ENCODE measurements at regions of chr4 and their contacts with region 1.

Region 1: DNA sequence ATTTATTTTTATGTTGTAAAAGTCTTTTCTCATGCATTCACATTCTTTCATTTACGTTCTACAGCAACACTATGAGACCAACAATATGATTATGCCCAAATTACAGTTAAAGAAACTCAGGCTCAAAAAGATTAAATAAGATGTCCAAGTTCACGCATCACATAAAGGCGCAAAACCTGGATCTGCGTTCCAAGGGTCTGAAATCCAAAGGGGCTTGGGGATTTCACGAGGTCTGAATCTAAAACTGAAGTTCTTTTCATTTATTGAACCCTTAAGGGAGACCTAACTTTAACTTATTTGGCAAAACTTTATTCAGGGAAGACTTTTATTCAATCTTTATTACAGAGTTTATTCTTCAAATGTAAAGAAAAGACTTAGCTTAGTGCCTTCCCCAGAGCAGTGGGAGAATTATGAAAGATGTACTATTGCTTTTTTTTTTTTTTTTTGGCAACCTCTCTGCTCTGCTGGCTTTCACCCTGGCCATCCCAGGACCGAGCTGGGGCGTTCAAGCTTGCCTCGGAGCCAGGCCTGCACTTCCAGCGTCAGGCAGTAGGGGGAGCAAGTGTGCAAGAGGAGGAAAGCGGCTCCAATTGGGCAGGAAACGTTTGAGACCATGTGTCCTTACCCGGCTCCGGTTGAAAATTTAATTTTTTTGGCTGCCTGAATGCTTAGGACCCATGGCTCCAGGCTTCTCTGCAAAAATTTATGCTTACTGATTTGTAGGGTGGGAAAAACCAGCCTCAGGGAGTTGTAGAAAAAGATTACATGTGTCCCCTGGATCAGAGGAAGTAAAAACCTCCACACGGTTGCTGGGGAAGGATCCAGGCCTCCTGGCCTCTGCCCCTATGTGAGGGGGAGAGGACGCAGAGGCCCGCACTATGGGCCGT is 344.3 kb upstream of the KLF3 start:
- DNase-seq: peak; percentile 98
- H3K4me3 ChIP-seq: peak overlapping the region in 3 of 4 donors; percentile 1 to 34 (median 6)
- H3K27ac ChIP-seq: peak overlapping the region; percentile 87 to 90 (median 90)
- H3K4me1 ChIP-seq: peaks cover 10 to 37% (median 19%) of the 10 kb centered on the region in 4 donors
- H3K27me3 ChIP-seq: no peaks in the 10 kb centered on the region
- CTCF ChIP-seq: peak; percentile 98 to 100 (median 99)
- EP300 ChIP-seq: no peak
- POLR2A ChIP-seq: no peak

Region 2: GRCh38 chr4:38062088-38062893 is 257.4 kb before region 1 on chr4:
- in situ Hi-C with region 1: loop called in 3 of 4 experiments (anchors 10 to 25 kb)
- intact Hi-C with region 1: loop called (anchors 10 kb)
- DNase-seq: peak; percentile 89
- H3K4me3 ChIP-seq: peak overlapping the region in 3 of 4 donors; percentile 12 to 46 (median 31)
- H3K27ac ChIP-seq: peak overlapping the region; percentile 72 to 80 (median 78)
- H3K4me1 ChIP-seq: peaks cover 0 to 26% (median 8%) of the 10 kb centered on the region in 4 donors
- H3K27me3 ChIP-seq: no peaks in the 10 kb centered on the region
- CTCF ChIP-seq: peak; percentile 82 to 91 (median 89)
- EP300 ChIP-seq: no peak
- POLR2A ChIP-seq: no peak

Region 3: GRCh38 chr4:38179690-38180377 is 139.9 kb before region 1 on chr4:
- in situ Hi-C with region 1: loop called in 3 of 4 experiments (anchors 5 to 10 kb)
- intact Hi-C with region 1: no loop called
- DNase-seq: peak; percentile 88
- H3K4me3 ChIP-seq: no peak overlapping the region
- H3K27ac ChIP-seq: peak overlapping the region; percentile 36 to 65 (median 52)
- H3K4me1 ChIP-seq: peaks cover 5 to 32% (median 16%) of the 10 kb centered on the region in 4 donors
- H3K27me3 ChIP-seq: no peaks in the 10 kb centered on the region
- CTCF ChIP-seq: peak; percentile 90 to 97 (median 94)
- EP300 ChIP-seq: no peak
- POLR2A ChIP-seq: no peak

Region 4: GRCh38 chr4:38189445-38189844 is 130.3 kb before region 1 on chr4:
- in situ Hi-C with region 1: loop called in 3 of 4 experiments (anchors 5 to 10 kb)
- intact Hi-C with region 1: no loop called
- DNase-seq: no peak
- H3K4me3 ChIP-seq: no peak overlapping the region
- H3K27ac ChIP-seq: peak overlapping the region; percentile 42 to 74 (median 66)
- H3K4me1 ChIP-seq: peaks cover 6 to 29% (median 11%) of the 10 kb centered on the region in 4 donors
- H3K27me3 ChIP-seq: no peaks in the 10 kb centered on the region
- CTCF ChIP-seq: no peak
- EP300 ChIP-seq: no peak
- POLR2A ChIP-seq: no peak

Region 5: GRCh38 chr4:38275331-38276100 is 44.2 kb before region 1 on chr4:
- in situ Hi-C with region 1: no loop called
- intact Hi-C with region 1: no loop called
- DNase-seq: no peak
- H3K4me3 ChIP-seq: no peak overlapping the region
- H3K27ac ChIP-seq: peak overlapping the region; percentile 17 to 53 (median 35)
- H3K4me1 ChIP-seq: peaks cover 0 to 31% (median 16%) of the 10 kb centered on the region in 4 donors
- H3K27me3 ChIP-seq: no peaks in the 10 kb centered on the region
- CTCF ChIP-seq: no peak
- EP300 ChIP-seq: no peak
- POLR2A ChIP-seq: no peak

Region 6: GRCh38 chr4:38663801-38664705 is 344.4 kb after region 1 on chr4 and contains the start of gene KLF3:
- in situ Hi-C with region 1: no loop called
- intact Hi-C with region 1: loop called (anchors 1 kb)
- DNase-seq: peak; percentile 96
- H3K4me3 ChIP-seq: peak within 1 kb of the TSS; percentile 89 to 99 (median 94)
- H3K27ac ChIP-seq: peak within 1 kb of the TSS; percentile 100
- H3K4me1 ChIP-seq: peaks cover 2 to 46% (median 33%) of the 10 kb centered on the region in 4 donors
- H3K27me3 ChIP-seq: no peaks in the 10 kb centered on the region
- CTCF ChIP-seq: no peak
- EP300 ChIP-seq: no peak
- POLR2A ChIP-seq: peak; percentile 85
- total RNA-seq, gene KLF3: 111 to 174 (median 132) TPM

Region 7: GRCh38 chr4:38675146-38676121 is 355.7 kb after region 1 on chr4:
- in situ Hi-C with region 1: loop called (anchors 5 to 10 kb)
- intact Hi-C with region 1: loop called (anchors 2 kb)
- DNase-seq: peak; percentile 90
- H3K4me3 ChIP-seq: peak overlapping the region in 1 of 4 donors; percentile 11
- H3K27ac ChIP-seq: peak overlapping the region; percentile 100
- H3K4me1 ChIP-seq: peaks cover 52 to 95% (median 81%) of the 10 kb centered on the region in 4 donors
- H3K27me3 ChIP-seq: no peaks in the 10 kb centered on the region
- CTCF ChIP-seq: peak; percentile 85 to 98 (median 96)
- EP300 ChIP-seq: no peak
- POLR2A ChIP-seq: no peak

Measured in transverse colon (tissue), 4 donors.